Calu3 (cell line): ENCODE measurements at regions of chr5 and their contacts with region 1.

Region 1: GRCh38 chr5:38441453-38442246 is 114.8 kb downstream of the LIFR start:
- DNase-seq: peak; percentile 87
- H3K4me3 Mint-ChIP-seq: no peak overlapping the region
- H3K27ac Mint-ChIP-seq: no peak overlapping the region
- H3K4me1 Mint-ChIP-seq: no peaks in the 10 kb centered on the region
- H3K27me3 Mint-ChIP-seq: peaks cover 59% of the 10 kb centered on the region
- CTCF ChIP-seq: peak; percentile 88

Region 2: DNA sequence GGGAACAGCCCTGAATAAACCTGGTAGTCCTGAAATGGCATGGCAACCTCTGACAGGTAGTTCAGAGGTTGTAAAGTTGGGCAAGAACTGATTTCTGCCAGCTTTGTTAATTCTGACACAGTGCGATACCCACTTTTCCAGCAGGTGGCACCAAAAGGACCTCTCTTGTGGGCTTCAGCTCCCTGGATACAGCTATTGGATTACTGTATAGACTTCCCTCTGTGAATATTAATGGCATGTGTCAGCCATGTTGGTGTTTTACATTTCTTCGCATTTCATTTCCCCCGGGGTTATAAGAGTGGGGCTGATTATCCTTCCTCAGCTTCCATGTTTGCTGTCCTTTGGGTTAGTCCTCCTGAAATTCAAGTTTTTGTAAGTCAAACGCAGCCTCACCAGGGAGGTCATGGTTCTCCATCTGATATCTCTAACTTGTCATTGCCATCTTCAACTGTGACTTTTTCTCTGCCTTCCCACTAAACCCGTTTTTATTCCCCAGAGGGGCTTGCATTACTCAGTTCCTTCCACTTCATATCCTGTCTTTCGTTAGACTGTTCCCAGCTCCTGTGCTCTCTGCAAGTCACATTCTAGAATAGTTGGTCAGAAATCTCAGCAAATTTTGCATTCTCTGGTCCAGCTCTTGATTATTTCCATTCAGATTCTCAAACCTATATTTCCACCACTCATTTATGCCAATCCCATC is 20.8 kb before region 1 on chr5:
- CTCF ChIA-PET with region 1: interaction called, 31 read pairs
- intact Hi-C with region 1: no loop called
- DNase-seq: peak; percentile 63
- H3K4me3 Mint-ChIP-seq: no peak overlapping the region
- H3K27ac Mint-ChIP-seq: no peak overlapping the region
- H3K4me1 Mint-ChIP-seq: no peaks in the 10 kb centered on the region
- H3K27me3 Mint-ChIP-seq: peaks cover 70% of the 10 kb centered on the region
- CTCF ChIP-seq: peak; percentile 74

Region 3: DNA sequence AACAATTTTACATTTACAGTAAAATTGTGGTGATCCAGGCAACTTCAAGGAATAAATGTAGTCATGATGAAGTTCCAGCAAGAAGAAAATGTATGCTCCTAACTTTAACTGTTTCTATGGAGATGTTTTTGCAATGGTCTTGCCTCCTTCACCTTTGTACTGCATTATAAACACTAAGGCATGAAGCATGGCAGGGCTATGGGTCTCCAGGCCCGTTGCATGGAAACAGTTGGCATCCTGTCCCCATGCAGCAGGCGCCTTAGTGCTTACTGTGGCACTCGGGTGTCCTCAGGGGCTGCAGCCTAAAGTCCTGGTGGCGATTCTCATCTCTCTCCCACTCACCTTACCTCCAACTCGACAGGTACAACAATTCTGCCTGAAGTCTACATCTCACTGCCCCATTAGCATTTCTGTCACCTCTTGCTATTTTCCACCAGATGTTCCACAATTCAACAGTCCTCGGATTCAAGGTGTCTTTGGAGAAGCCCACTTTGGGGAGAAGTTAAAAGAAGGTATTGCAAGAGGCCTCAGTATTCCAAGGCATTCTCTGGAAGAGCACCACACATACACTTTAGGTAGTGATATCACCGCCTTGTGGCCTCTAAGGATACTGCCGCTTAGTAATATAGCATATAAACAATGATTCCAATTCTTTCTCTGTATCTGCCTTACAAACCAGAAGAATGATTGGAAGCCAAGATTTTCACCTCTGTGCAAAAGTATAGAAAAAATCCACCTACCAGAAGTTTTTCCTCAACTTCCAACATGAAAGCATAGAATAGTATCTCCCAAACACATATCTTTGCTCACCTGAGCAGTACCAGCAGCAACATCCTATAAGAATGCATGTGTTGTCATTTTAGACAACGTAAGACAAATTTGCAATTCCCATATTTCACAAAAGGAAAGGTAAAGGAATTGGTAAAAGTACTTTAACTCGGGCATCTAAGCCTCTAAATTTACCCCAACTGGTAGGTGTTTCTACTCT is 109.7 kb after region 1 on chr5:
- CTCF ChIA-PET with region 1: interaction called, 8 read pairs
- intact Hi-C with region 1: loop called (anchors 1 kb)
- DNase-seq: peak; percentile 22
- H3K4me3 Mint-ChIP-seq: no peak overlapping the region
- H3K27ac Mint-ChIP-seq: no peak overlapping the region
- H3K4me1 Mint-ChIP-seq: peaks cover 6% of the 10 kb centered on the region
- H3K27me3 Mint-ChIP-seq: no peaks in the 10 kb centered on the region
- CTCF ChIP-seq: peak; percentile 75

Region 4: DNA sequence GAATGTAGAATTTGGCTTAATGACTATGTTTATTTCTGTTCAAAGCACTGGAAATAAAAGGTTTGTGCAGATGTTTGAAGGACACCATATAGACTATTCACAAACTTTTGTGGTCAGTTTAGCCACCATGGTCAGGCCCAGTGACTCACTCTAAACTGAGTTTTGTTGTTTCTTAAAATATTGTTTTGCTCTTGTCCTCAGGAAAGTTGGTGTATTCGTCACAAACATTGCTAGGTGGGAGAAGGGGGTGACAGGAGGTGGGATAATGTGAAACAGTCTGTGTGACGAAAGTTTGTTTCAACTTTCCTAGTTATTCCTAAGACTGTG is 149.8 kb after region 1 on chr5:
- CTCF ChIA-PET with region 1: no interaction called
- intact Hi-C with region 1: no loop called
- DNase-seq: no peak
- H3K4me3 Mint-ChIP-seq: no peak overlapping the region
- H3K27ac Mint-ChIP-seq: no peak overlapping the region
- H3K4me1 Mint-ChIP-seq: peaks cover 14% of the 10 kb centered on the region
- H3K27me3 Mint-ChIP-seq: no peaks in the 10 kb centered on the region
- CTCF ChIP-seq: no peak

Region 5: GRCh38 chr5:38666668-38667498 is 225.2 kb after region 1 on chr5:
- CTCF ChIA-PET with region 1: interaction called, 74 read pairs
- intact Hi-C with region 1: loop called (anchors 1 kb)
- DNase-seq: peak; percentile 52
- H3K4me3 Mint-ChIP-seq: no peak overlapping the region
- H3K27ac Mint-ChIP-seq: no peak overlapping the region
- H3K4me1 Mint-ChIP-seq: peaks cover 14% of the 10 kb centered on the region
- H3K27me3 Mint-ChIP-seq: peaks cover 22% of the 10 kb centered on the region
- CTCF ChIP-seq: peak; percentile 54

Region 6: GRCh38 chr5:38809388-38810359 is 368.0 kb after region 1 on chr5:
- CTCF ChIA-PET with region 1: interaction called, 106 read pairs
- intact Hi-C with region 1: loop called (anchors 1 kb)
- DNase-seq: peak; percentile 77
- H3K4me3 Mint-ChIP-seq: no peak overlapping the region
- H3K27ac Mint-ChIP-seq: no peak overlapping the region
- H3K4me1 Mint-ChIP-seq: peaks cover 15% of the 10 kb centered on the region
- H3K27me3 Mint-ChIP-seq: peaks cover 9% of the 10 kb centered on the region
- CTCF ChIP-seq: peak; percentile 72